H1 (cell line): ENCODE measurements at regions of chr14 and their contacts with region 1.

Region 1: GRCh38 chr14:93132470-93133065 is 16.8 kb upstream of the ITPK1 start:
- DNase-seq: no peak
- H3K4me3 ChIP-seq: no peak overlapping the region
- H3K27ac ChIP-seq: no peak overlapping the region
- H3K4me1 ChIP-seq: no peaks in the 10 kb centered on the region; a peak in 1 of 7 replicates
- H3K27me3 ChIP-seq: no peaks in the 10 kb centered on the region
- CTCF ChIP-seq: peak; percentile 42 to 66 (median 48); a peak in 3 of 4 replicates
- EP300 ChIP-seq: no peak
- POLR2A ChIP-seq: no peak
- RAD21 ChIP-seq: peak; percentile 15 to 31; a peak in 1 of 4 replicates

Region 2: DNA sequence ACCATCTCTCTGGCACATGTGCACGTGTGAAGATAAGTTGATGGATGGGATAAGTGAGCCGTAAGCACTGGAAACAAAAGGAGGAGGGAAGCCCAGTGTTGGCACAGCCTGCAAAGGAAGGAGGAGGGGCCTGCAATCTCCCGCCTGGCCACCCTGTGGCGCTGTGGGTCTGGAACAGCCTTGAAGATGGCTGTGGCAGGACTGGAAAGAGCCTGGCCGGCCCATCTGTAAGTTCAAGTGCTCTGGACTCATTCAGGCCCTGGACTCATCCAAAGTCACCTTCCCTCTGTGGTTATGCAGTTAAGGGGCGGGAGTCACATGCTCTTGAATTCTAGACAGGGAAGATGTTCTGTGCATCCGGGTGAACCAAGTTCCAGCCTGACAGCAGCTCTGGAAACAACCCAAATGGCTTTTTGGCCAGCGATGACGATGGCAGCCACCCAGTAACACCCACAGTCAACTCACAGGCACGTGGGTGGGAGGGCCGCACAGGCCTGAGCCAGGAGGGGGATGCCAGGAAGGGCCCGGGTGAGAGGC is 159.2 kb before region 1 on chr14:
- CTCF ChIA-PET with region 1: interaction called, 10 read pairs
- POLR2A ChIA-PET with region 1: no interaction called
- DNase-seq: peak; percentile 73 to 100
- H3K4me3 ChIP-seq: no peak overlapping the region
- H3K27ac ChIP-seq: no peak overlapping the region
- H3K4me1 ChIP-seq: peaks cover 0 to 16% (median 8%) of the 10 kb centered on the region in 4 experiments; a peak in 5 of 7 replicates
- H3K27me3 ChIP-seq: no peaks in the 10 kb centered on the region
- CTCF ChIP-seq: peak; percentile 92 to 98 (median 98)
- EP300 ChIP-seq: peak in 1 of 2 experiments; percentile 95; a peak in 1 of 3 replicates
- POLR2A ChIP-seq: no peak
- RAD21 ChIP-seq: peak; percentile 92 to 93

Region 3: GRCh38 chr14:93096691-93097322 is 35.8 kb before region 1 on chr14:
- CTCF ChIA-PET with region 1: interaction called, 18 read pairs
- POLR2A ChIA-PET with region 1: no interaction called
- DNase-seq: no peak
- H3K4me3 ChIP-seq: no peak overlapping the region
- H3K27ac ChIP-seq: no peak overlapping the region
- H3K4me1 ChIP-seq: peaks cover 2 to 20% (median 5%) of the 10 kb centered on the region in 4 experiments
- H3K27me3 ChIP-seq: no peaks in the 10 kb centered on the region
- CTCF ChIP-seq: no peak
- EP300 ChIP-seq: no peak
- POLR2A ChIP-seq: no peak
- RAD21 ChIP-seq: no peak

Region 4: GRCh38 chr14:93103392-93104080 is 29.0 kb before region 1 on chr14:
- CTCF ChIA-PET with region 1: interaction called, 20 read pairs
- POLR2A ChIA-PET with region 1: no interaction called
- DNase-seq: no peak
- H3K4me3 ChIP-seq: no peak overlapping the region
- H3K27ac ChIP-seq: no peak overlapping the region
- H3K4me1 ChIP-seq: peaks cover 3 to 17% (median 10%) of the 10 kb centered on the region in 4 experiments
- H3K27me3 ChIP-seq: no peaks in the 10 kb centered on the region
- CTCF ChIP-seq: no peak
- EP300 ChIP-seq: no peak
- POLR2A ChIP-seq: no peak
- RAD21 ChIP-seq: no peak

Region 5: GRCh38 chr14:93120517-93120916 is 12.1 kb before region 1 on chr14:
- CTCF ChIA-PET with region 1: interaction called, 69 read pairs
- POLR2A ChIA-PET with region 1: interaction called, 5 read pairs
- DNase-seq: no peak
- H3K4me3 ChIP-seq: no peak overlapping the region
- H3K27ac ChIP-seq: no peak overlapping the region
- H3K4me1 ChIP-seq: peaks cover 0 to 4% (median 3%) of the 10 kb centered on the region in 4 experiments; a peak in 3 of 7 replicates
- H3K27me3 ChIP-seq: no peaks in the 10 kb centered on the region
- CTCF ChIP-seq: no peak
- EP300 ChIP-seq: no peak
- POLR2A ChIP-seq: no peak
- RAD21 ChIP-seq: no peak

Region 6: GRCh38 chr14:93146119-93146518 is 13.6 kb after region 1 on chr14:
- CTCF ChIA-PET with region 1: interaction called, 15 read pairs
- POLR2A ChIA-PET with region 1: no interaction called
- DNase-seq: no peak
- H3K4me3 ChIP-seq: no peak overlapping the region
- H3K27ac ChIP-seq: no peak overlapping the region
- H3K4me1 ChIP-seq: 0 out of 7 replicates have a peak, but pooled peaks cover 0 to 3% (median 0%) of the 10 kb centered on the region in 4 experiments
- H3K27me3 ChIP-seq: no peaks in the 10 kb centered on the region; a peak in 1 of 7 replicates
- CTCF ChIP-seq: no peak
- EP300 ChIP-seq: no peak
- POLR2A ChIP-seq: no peak
- RAD21 ChIP-seq: no peak